CD4-positive, alpha-beta memory T cell (primary cell): ENCODE measurements at regions of chr12 and their contacts with region 1.

Region 1: DNA sequence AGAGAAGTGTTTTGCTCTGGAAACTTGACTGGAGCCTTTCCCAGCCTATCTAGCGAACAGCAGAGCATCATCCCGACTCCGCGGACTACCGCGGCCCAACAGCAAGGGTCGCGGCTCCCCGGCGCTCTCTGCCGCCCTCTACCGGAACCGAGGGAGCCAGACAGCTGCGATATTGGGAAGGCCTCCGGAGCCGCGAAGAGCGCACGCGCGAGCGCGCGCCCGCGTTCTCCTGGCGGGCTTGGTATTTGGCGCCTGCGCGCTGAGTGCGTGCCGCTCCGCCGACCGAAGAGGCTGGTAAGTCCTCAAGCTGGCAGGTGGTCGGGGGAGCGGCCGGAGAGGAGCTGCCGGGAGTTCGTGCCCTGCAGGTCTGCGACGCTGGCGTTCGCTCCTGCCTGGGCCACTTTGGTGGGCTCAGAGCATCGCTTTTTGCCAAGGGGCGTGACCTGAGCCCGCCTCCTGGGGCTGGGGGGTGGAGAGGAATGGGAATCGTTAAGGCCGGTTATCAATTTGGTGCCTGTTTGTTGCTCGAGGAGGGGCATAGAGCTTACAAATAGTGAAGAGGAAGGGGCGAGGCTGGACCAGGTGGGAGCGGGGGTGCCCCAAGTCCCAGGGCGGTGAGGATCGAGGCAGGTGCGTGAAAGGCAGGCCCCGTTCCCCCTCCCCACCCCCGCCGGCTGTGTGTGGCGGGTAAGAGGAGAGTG is at the start of gene TMEM106C:
- DNase-seq: peak; percentile 89 to 93 (median 92)
- H3K4me3 ChIP-seq: peak within 1 kb of the TSS; percentile 84 to 92
- H3K4me3 Mint-ChIP-seq: peak within 1 kb of the TSS; percentile 93 to 99 (median 99)
- H3K27ac ChIP-seq: peak within 1 kb of the TSS; percentile 62
- H3K27ac Mint-ChIP-seq: peak within 1 kb of the TSS; percentile 91 to 97 (median 92)
- H3K4me1 ChIP-seq: peaks cover 19% of the 10 kb centered on the region
- H3K4me1 Mint-ChIP-seq: peaks cover 11 to 39% (median 32%) of the 10 kb centered on the region in 4 donors
- H3K27me3 ChIP-seq: no peaks in the 10 kb centered on the region
- H3K27me3 Mint-ChIP-seq: peaks cover 0 to 5% of the 10 kb centered on the region in 2 donors
- total RNA-seq, gene TMEM106C: 42.5 to 42.7 TPM

Region 2: GRCh38 chr12:47904713-47905310 is 58.7 kb before region 1 on chr12 and contains the start of gene VDR:
- CTCF ChIA-PET with region 1: interaction called, 5 read pairs
- POLR2A ChIA-PET with region 1: interaction called, 9 read pairs
- intact Hi-C with region 1: loop called (anchors 1 kb)
- DNase-seq: peak; percentile 62 to 79 (median 67)
- H3K4me3 ChIP-seq: peak within 1 kb of the TSS; percentile 78 to 86
- H3K4me3 Mint-ChIP-seq: peak within 1 kb of the TSS; percentile 86 to 97 (median 90)
- H3K27ac ChIP-seq: peak within 1 kb of the TSS; percentile 36
- H3K27ac Mint-ChIP-seq: peak within 1 kb of the TSS; percentile 20 to 94 (median 74)
- H3K4me1 ChIP-seq: peaks cover 52% of the 10 kb centered on the region
- H3K4me1 Mint-ChIP-seq: peaks cover 29 to 67% (median 48%) of the 10 kb centered on the region in 4 donors
- H3K27me3 ChIP-seq: no peaks in the 10 kb centered on the region
- H3K27me3 Mint-ChIP-seq: peaks cover 0 to 1% of the 10 kb centered on the region in 2 donors
- total RNA-seq, gene VDR: 1.6 to 3.2 TPM

Region 3: DNA sequence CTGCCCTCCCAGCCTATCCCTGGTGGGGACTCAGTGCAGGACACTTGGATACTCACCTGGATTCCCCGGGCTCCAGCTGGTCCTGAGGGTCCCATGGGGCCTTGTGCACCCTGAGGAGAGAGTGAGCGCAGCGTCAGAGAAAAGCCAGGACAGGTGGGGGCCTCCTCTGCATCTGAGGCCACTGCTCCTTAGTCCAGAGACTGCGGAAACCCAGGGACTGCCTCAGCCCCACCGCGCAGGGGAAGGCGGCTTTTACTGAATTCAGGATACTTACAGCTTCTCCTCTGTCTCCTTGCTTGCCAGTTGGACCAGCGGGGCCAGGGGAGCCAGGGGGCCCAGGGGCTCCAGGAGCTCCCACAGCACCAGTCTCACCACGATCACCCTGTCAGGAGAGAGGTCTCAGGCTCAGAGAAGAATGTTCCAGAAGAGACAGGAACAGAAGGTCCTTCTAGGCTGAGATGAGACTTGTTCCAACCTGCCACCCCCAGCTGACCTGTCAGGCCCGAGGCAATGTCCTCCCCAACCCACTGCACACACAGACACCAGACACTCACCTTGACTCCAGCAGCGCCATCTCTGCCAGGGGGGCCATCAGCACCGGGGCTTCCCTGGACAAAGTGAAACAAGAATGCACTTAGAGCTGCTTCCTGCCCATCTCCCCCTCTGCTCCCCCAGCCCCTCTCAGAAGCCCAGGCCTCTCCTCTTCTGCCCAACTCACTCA is 13.7 kb after region 1 on chr12:
- CTCF ChIA-PET with region 1: interaction called, 24 read pairs
- POLR2A ChIA-PET with region 1: no interaction called
- intact Hi-C with region 1: no loop called
- DNase-seq: no peak
- H3K4me3 ChIP-seq: no peak overlapping the region
- H3K4me3 Mint-ChIP-seq: no peak overlapping the region
- H3K27ac ChIP-seq: no peak overlapping the region
- H3K27ac Mint-ChIP-seq: no peak overlapping the region
- H3K4me1 ChIP-seq: no peaks in the 10 kb centered on the region
- H3K4me1 Mint-ChIP-seq: no peaks in the 10 kb centered on the region
- H3K27me3 ChIP-seq: no peaks in the 10 kb centered on the region
- H3K27me3 Mint-ChIP-seq: no peaks in the 10 kb centered on the region

Region 4: GRCh38 chr12:48157018-48157888 is 193.8 kb after region 1 on chr12 and contains the start of gene ASB8:
- CTCF ChIA-PET with region 1: interaction called, 10 read pairs
- POLR2A ChIA-PET with region 1: interaction called, 3 read pairs
- intact Hi-C with region 1: loop called (anchors 2 kb)
- DNase-seq: peak; percentile 98 to 99 (median 98)
- H3K4me3 ChIP-seq: peak within 1 kb of the TSS; percentile 76 to 84
- H3K4me3 Mint-ChIP-seq: peak within 1 kb of the TSS; percentile 94 to 98 (median 97)
- H3K27ac ChIP-seq: peak within 1 kb of the TSS; percentile 81
- H3K27ac Mint-ChIP-seq: peak within 1 kb of the TSS; percentile 96 to 99 (median 99)
- H3K4me1 ChIP-seq: peaks cover 23% of the 10 kb centered on the region
- H3K4me1 Mint-ChIP-seq: peaks cover 16 to 49% (median 35%) of the 10 kb centered on the region in 4 donors
- H3K27me3 ChIP-seq: no peaks in the 10 kb centered on the region
- H3K27me3 Mint-ChIP-seq: no peaks in the 10 kb centered on the region
- total RNA-seq, gene ASB8: 61.0 to 64.6 TPM